Naive thymus-derived CD4-positive, alpha-beta T cell (primary cell): ENCODE measurements at regions of chr3 and their contacts with region 1.

Region 1: GRCh38 chr3:101573449-101574387 is at the start of gene PCNP:
- DNase-seq: peak; percentile 95 to 99 (median 98)
- ATAC-seq: peak; percentile 91
- H3K4me3 ChIP-seq: peak within 1 kb of the TSS; percentile 89
- H3K4me3 Mint-ChIP-seq: peak within 1 kb of the TSS; percentile 91 to 100 (median 95)
- H3K27ac ChIP-seq: peak within 1 kb of the TSS; percentile 95
- H3K27ac Mint-ChIP-seq: peak within 1 kb of the TSS; percentile 92 to 99 (median 98)
- H3K4me1 ChIP-seq: peaks cover 33 to 52% of the 10 kb centered on the region in 2 donors
- H3K4me1 Mint-ChIP-seq: peaks cover 31 to 85% (median 72%) of the 10 kb centered on the region in 7 donors
- H3K27me3 ChIP-seq: no peaks in the 10 kb centered on the region
- H3K27me3 Mint-ChIP-seq: peaks cover 0 to 2% (median 0%) of the 10 kb centered on the region in 5 donors
- total RNA-seq, gene PCNP: 129 to 172 (median 160) TPM

Region 2: DNA sequence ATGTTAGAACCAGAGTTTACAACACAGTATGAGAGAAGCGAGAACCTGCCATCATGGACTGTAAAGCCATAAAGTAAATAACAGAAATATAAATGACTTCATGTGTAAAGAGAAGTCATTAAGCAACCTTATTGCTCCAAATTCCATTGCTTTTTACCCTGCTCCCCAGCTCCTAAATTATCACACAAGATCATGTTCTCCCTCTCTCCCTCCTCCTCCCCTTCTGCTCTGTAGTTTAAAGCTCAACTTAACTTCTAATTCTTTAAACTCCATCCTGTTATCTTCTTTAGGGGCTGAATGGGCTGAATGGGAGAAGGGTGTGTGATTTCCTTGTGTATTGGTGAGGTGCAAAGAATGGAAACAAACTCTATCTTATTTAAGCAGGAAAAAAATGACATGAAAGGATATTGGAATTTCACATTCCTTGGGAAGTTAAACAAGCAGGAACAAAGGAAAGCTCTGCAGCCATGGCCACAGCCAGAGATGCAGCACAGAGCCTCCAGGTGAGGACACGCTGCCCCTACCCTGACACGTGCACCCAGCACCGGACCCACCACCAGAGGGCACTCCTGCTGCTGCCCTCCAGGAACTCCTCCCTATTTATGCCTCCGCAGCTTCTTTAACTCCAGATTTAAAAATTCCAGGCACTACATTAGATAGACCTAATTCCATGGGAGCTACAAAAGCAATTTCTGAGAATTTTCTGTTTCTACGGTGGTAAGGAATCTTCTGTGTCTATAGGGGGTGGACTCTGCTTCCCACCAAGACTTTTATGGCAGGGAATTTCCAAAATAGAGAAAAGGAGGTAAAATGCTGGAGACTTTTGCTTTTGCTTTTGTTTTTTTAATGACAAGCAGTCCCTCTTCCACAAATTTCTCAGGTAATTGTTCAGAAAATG is 503.6 kb before region 1 on chr3:
- CTCF ChIA-PET with region 1: no interaction called
- POLR2A ChIA-PET with region 1: no interaction called
- intact Hi-C with region 1: loop called in 1 of 2 experiments (anchors 1 kb)
- DNase-seq: peak; percentile 17 to 60 (median 30)
- ATAC-seq: peak; percentile 66
- H3K4me3 ChIP-seq: no peak overlapping the region
- H3K4me3 Mint-ChIP-seq: no peak overlapping the region
- H3K27ac ChIP-seq: no peak overlapping the region
- H3K27ac Mint-ChIP-seq: peak overlapping the region in 1 of 9 donors; percentile 39
- H3K4me1 ChIP-seq: peaks cover 0 to 4% of the 10 kb centered on the region in 2 donors
- H3K4me1 Mint-ChIP-seq: peaks cover 0 to 4% (median 0%) of the 10 kb centered on the region in 7 donors
- H3K27me3 ChIP-seq: no peaks in the 10 kb centered on the region
- H3K27me3 Mint-ChIP-seq: peaks cover 13 to 25% (median 20%) of the 10 kb centered on the region in 5 donors

Region 3: DNA sequence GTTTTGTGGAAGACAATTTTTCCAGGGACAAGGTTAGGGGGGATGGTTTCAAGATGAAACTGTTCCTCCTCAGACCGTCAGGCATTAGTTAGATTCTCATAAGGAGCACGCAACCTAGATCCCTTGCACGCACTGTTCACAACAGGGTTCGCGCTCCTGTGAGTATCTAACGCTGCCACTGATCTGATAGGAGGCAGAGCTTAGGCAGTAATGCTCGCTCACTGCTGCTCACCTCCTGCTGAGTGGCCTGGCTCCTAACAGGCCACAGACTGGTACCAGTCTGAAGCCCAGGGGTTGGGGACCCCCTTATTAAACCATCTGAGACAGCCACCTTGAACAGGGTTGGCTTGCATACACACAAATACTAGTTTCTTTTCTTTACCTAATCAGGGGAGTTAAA is 239.8 kb before region 1 on chr3:
- CTCF ChIA-PET with region 1: no interaction called
- POLR2A ChIA-PET with region 1: no interaction called
- intact Hi-C with region 1: no loop called
- DNase-seq: no peak
- ATAC-seq: no peak
- H3K4me3 ChIP-seq: no peak overlapping the region
- H3K4me3 Mint-ChIP-seq: no peak overlapping the region
- H3K27ac ChIP-seq: no peak overlapping the region
- H3K27ac Mint-ChIP-seq: peak overlapping the region in 1 of 9 donors; percentile 74
- H3K4me1 ChIP-seq: no peaks in the 10 kb centered on the region
- H3K4me1 Mint-ChIP-seq: no peaks in the 10 kb centered on the region
- H3K27me3 ChIP-seq: no peaks in the 10 kb centered on the region
- H3K27me3 Mint-ChIP-seq: no peaks in the 10 kb centered on the region

Region 4: GRCh38 chr3:101512646-101513418 is 60.9 kb before region 1 on chr3 and contains the start of gene SENP7:
- CTCF ChIA-PET with region 1: no interaction called
- POLR2A ChIA-PET with region 1: interaction called, 73 read pairs
- intact Hi-C with region 1: loop called (anchors 1 kb)
- DNase-seq: peak; percentile 55 to 82 (median 76)
- ATAC-seq: peak; percentile 74
- H3K4me3 ChIP-seq: peak within 1 kb of the TSS; percentile 84
- H3K4me3 Mint-ChIP-seq: peak within 1 kb of the TSS; percentile 98 to 100 (median 100)
- H3K27ac ChIP-seq: peak within 1 kb of the TSS; percentile 92
- H3K27ac Mint-ChIP-seq: peak within 1 kb of the TSS; percentile 96 to 100 (median 98)
- H3K4me1 ChIP-seq: peaks cover 24 to 41% of the 10 kb centered on the region in 2 donors
- H3K4me1 Mint-ChIP-seq: peaks cover 35 to 79% (median 70%) of the 10 kb centered on the region in 7 donors
- H3K27me3 ChIP-seq: no peaks in the 10 kb centered on the region
- H3K27me3 Mint-ChIP-seq: peaks cover 0 to 4% (median 0%) of the 10 kb centered on the region in 5 donors
- total RNA-seq, gene SENP7: 28.8 to 79.0 (median 49.5) TPM

Region 5: DNA sequence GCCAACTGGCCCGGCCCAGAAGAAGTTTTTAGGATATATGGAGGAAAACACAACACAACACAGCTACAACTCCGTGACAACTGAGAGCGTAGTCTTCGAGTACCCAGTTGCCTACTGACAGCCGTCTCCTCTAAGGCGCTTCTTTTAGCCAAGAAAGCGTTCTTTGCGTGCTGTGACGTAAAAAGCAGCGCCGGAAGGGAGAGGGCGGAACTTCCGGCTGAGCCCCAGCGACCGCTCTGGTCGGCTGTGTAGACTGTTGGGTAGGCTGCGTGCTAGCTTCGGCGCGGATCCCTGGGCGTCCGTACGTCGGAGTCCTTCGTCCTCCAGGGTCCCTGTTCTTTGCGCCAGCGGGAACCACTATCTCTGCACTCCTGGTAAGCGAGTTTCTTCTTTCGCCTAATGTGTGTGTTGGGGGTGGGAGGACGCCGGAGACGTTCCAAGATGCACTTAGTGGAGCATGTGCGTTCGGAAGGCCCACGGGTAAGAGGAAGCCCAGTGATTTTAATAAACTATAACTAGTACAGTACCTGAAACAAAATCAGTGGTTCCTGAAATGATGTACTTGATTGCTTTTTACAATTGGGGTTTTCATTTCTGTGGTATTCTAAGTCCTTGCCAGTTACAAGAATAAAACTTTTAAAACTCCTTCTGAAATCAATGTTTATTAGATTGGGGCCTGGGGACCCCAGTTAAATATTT is 11.9 kb before region 1 on chr3 and contains the start of gene TRMT10C:
- CTCF ChIA-PET with region 1: interaction called, 5 read pairs
- POLR2A ChIA-PET with region 1: interaction called, 24 read pairs
- intact Hi-C with region 1: loop called (anchors 1 kb)
- DNase-seq: peak; percentile 77 to 94 (median 91)
- ATAC-seq: peak; percentile 98
- H3K4me3 ChIP-seq: peak within 1 kb of the TSS; percentile 94
- H3K4me3 Mint-ChIP-seq: peak within 1 kb of the TSS; percentile 95 to 99 (median 99)
- H3K27ac ChIP-seq: peak within 1 kb of the TSS; percentile 93
- H3K27ac Mint-ChIP-seq: peak within 1 kb of the TSS; percentile 93 to 99 (median 98)
- H3K4me1 ChIP-seq: peaks cover 8 to 14% of the 10 kb centered on the region in 2 donors
- H3K4me1 Mint-ChIP-seq: peaks cover 19 to 48% (median 38%) of the 10 kb centered on the region in 7 donors
- H3K27me3 ChIP-seq: no peaks in the 10 kb centered on the region
- H3K27me3 Mint-ChIP-seq: peaks cover 2 to 10% (median 3%) of the 10 kb centered on the region in 5 donors
- total RNA-seq, gene TRMT10C: 24.1 to 32.7 (median 27.1) TPM

Region 6: GRCh38 chr3:101685870-101686412 is 112.2 kb after region 1 on chr3:
- CTCF ChIA-PET with region 1: interaction called, 3 read pairs
- POLR2A ChIA-PET with region 1: interaction called, 20 read pairs
- intact Hi-C with region 1: loop called (anchors 1 kb)
- DNase-seq: peak in 2 of 9 donors; percentile 21 to 24
- ATAC-seq: peak; percentile 1
- H3K4me3 ChIP-seq: peak overlapping the region; percentile 72
- H3K4me3 Mint-ChIP-seq: peak overlapping the region; percentile 90 to 100 (median 98)
- H3K27ac ChIP-seq: peak overlapping the region; percentile 92
- H3K27ac Mint-ChIP-seq: peak overlapping the region; percentile 94 to 100 (median 99)
- H3K4me1 ChIP-seq: peaks cover 24 to 25% of the 10 kb centered on the region in 2 donors
- H3K4me1 Mint-ChIP-seq: peaks cover 20 to 58% (median 41%) of the 10 kb centered on the region in 7 donors
- H3K27me3 ChIP-seq: no peaks in the 10 kb centered on the region
- H3K27me3 Mint-ChIP-seq: no peaks in the 10 kb centered on the region

Region 7: DNA sequence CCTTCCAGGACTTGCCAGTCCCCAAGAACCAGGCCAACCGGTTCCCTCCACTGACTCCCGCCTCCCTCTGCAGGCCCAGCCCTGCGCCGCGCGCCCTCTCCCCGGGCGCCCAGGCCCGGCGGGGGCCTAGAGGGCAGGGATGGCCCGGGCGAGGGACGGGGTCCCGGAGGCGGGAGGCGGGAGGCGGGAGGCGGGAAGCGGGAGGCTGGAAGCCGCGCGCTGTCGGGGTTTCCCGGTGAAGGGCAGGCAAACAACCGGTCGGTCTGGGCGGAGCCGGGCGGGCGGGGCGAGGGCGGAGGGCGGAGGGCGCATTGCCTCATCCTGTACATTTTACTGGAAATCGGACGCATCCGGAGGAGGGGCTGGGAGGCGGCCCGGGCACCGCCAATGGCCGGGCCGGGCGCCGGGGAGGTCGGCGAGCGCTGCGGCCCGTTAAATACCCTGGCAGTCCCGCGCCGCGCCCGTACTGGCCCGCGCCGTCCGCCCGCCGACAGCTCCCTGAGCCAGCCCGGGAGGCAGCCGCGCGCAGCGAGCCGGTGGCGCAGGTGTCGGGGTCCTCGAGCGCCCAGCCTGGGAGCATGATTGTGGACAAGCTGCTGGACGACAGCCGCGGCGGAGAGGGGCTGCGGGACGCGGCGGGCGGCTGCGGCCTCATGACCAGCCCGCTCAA is 275.5 kb after region 1 on chr3 and contains the start of gene NFKBIZ:
- CTCF ChIA-PET with region 1: no interaction called
- POLR2A ChIA-PET with region 1: interaction called, 5 read pairs
- intact Hi-C with region 1: loop called (anchors 1 to 2 kb)
- DNase-seq: peak; percentile 81 to 94 (median 88)
- ATAC-seq: peak; percentile 88
- H3K4me3 ChIP-seq: peak within 1 kb of the TSS; percentile 98
- H3K4me3 Mint-ChIP-seq: peak within 1 kb of the TSS; percentile 90 to 100 (median 98)
- H3K27ac ChIP-seq: peak within 1 kb of the TSS; percentile 100
- H3K27ac Mint-ChIP-seq: peak within 1 kb of the TSS; percentile 98 to 100 (median 99)
- H3K4me1 ChIP-seq: peaks cover 20 to 27% of the 10 kb centered on the region in 2 donors
- H3K4me1 Mint-ChIP-seq: peaks cover 36 to 51% (median 42%) of the 10 kb centered on the region in 7 donors
- H3K27me3 ChIP-seq: no peaks in the 10 kb centered on the region
- H3K27me3 Mint-ChIP-seq: no peaks in the 10 kb centered on the region
- total RNA-seq, gene NFKBIZ: 108 to 913 (median 140) TPM